ENCODE measurements at regions of chr15 and their contacts with region 1.

Region 1: GRCh38 chr15:75201609-75202250 is at the start of gene C15orf39:
- DNase-seq: peak; percentile 45 to 89 (median 69)
- ATAC-seq: peak; percentile 53
- H3K4me3 ChIP-seq: peak within 1 kb of the TSS; percentile 73
- H3K4me3 Mint-ChIP-seq: peak within 1 kb of the TSS; percentile 96
- H3K27ac ChIP-seq: peak within 1 kb of the TSS; percentile 44 to 88
- H3K27ac Mint-ChIP-seq: peak within 1 kb of the TSS; percentile 96
- H3K4me1 ChIP-seq: peaks cover 57% of the 10 kb centered on the region
- H3K4me1 Mint-ChIP-seq: peaks cover 37% of the 10 kb centered on the region
- H3K27me3 ChIP-seq: no peaks in the 10 kb centered on the region
- H3K27me3 Mint-ChIP-seq: no peaks in the 10 kb centered on the region
- CTCF ChIP-seq: peak; percentile 80
- total RNA-seq, gene C15orf39: 41.6 to 42.1 TPM

Region 2: DNA sequence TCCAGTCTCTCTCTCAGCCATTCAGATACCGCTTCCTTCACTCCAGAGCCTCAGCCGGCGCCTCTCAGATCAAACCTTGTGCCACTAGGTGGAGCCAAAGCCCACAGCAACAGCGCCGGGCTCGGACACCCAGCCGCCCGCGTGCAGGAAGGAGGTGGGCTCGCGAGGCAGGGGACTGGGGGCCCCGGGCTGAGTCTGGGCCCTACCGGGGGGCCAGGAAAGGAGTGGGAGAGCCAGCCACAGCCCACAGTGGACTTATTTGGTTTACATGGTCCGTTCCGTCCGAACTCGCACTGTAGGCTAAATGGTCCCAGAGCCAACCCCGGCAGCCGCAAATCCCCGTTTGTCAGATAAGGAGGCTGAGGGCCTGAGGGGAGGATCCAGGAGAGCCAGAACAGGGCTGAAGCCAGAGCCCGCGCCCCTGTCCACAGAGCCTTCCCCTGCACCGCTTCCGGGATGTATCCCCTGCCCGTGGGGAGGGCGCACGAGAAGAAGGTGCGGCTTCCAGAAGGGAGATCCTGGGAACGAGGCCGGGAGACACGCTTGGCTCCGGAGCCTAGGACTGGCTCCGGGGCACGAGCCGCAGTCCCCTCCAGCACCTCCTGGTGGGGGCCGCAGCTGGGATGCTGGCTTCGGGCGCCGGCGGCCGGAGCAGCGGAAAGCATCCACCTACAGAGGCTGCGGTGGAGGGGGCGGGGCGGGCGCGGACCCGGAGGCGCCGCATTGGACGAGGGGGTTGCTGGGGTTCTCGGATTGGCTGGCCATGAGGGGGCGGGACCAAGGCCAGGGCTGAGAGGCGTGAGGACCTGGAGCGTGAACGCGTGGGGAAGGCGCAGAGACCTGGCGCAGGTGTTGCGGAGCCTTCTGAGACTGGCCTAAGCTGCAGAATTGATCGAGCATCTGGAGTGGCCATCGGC is 827.7 kb before region 1 on chr15:
- CTCF ChIA-PET with region 1: no interaction called
- POLR2A ChIA-PET with region 1: no interaction called
- intact Hi-C with region 1: loop called in 1 of 2 experiments (anchors 5 kb)
- DNase-seq: peak; percentile 91 to 97 (median 95)
- ATAC-seq: peak; percentile 95
- H3K4me3 ChIP-seq: peak overlapping the region; percentile 94
- H3K4me3 Mint-ChIP-seq: peak overlapping the region; percentile 86
- H3K27ac ChIP-seq: peak overlapping the region; percentile 51 to 54
- H3K27ac Mint-ChIP-seq: peak overlapping the region; percentile 8
- H3K4me1 ChIP-seq: peaks cover 26% of the 10 kb centered on the region
- H3K4me1 Mint-ChIP-seq: peaks cover 12% of the 10 kb centered on the region
- H3K27me3 ChIP-seq: peaks cover 0 to 2% of the 10 kb centered on the region in 2 experiments
- H3K27me3 Mint-ChIP-seq: peaks cover 13% of the 10 kb centered on the region
- CTCF ChIP-seq: peak; percentile 99

Region 3: GRCh38 chr15:74695597-74696397 is 505.9 kb before region 1 on chr15 and contains the start of gene EDC3:
- CTCF ChIA-PET with region 1: no interaction called
- POLR2A ChIA-PET with region 1: no interaction called
- intact Hi-C with region 1: loop called in 1 of 2 experiments (anchors 10 kb)
- DNase-seq: peak; percentile 70 to 93 (median 80)
- ATAC-seq: peak; percentile 86
- H3K4me3 ChIP-seq: peak within 1 kb of the TSS; percentile 78
- H3K4me3 Mint-ChIP-seq: peak within 1 kb of the TSS; percentile 100
- H3K27ac ChIP-seq: peak within 1 kb of the TSS; percentile 60 to 83
- H3K27ac Mint-ChIP-seq: peak within 1 kb of the TSS; percentile 98
- H3K4me1 ChIP-seq: peaks cover 16% of the 10 kb centered on the region
- H3K4me1 Mint-ChIP-seq: peaks cover 44% of the 10 kb centered on the region
- H3K27me3 ChIP-seq: no peaks in the 10 kb centered on the region
- H3K27me3 Mint-ChIP-seq: peaks cover under 1% of the 10 kb centered on the region
- CTCF ChIP-seq: no peak
- total RNA-seq, gene EDC3: 11.0 to 11.1 TPM

Region 4: DNA sequence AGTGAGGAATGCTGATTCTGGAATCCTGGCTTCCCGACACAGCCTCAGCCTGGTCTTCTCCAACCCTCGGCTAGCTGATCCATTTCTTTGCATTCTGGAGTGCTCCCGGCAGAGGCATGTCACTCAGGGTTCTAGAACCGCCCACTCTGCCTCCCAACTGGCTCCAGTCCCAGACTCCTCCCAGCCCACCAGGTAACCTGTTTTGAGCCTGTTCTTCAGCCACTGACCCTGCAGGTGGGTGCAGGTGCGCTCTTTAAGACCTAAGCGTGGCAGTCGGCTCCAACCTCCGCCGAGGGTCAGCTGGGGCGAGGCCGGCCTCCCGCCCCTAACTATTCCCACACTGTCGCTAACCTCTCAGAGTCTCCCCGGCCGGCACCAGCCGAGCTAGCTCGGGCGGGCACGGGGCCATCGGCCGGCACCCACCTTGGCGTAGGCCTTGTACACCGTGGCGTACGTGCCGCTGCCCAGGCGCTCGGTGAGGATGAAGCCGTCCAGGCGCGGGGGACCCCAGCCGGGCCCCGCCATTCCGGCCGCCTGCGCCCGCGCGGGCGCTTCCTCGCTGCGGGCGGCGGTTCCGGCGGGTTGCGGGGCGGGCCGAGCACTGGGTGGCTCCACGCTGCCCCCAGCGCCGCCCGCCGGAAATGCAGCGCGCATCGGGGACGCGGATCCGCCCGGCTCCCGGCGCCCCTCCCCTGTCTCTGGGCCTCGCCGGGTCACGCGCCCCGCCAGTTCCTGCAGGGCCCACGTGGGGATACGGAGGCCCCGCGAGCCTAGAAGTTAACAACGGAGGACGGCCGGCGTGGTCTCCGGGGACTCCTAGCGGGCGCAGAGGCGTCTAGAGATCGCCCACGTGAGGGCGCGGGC is 358.9 kb before region 1 on chr15 and contains the start of gene ULK3:
- CTCF ChIA-PET with region 1: no interaction called
- POLR2A ChIA-PET with region 1: no interaction called
- intact Hi-C with region 1: loop called in 1 of 2 experiments (anchors 5 kb)
- DNase-seq: peak; percentile 84 to 97 (median 92)
- ATAC-seq: peak; percentile 91
- H3K4me3 ChIP-seq: peak within 1 kb of the TSS; percentile 95
- H3K4me3 Mint-ChIP-seq: peak within 1 kb of the TSS; percentile 93
- H3K27ac ChIP-seq: peak within 1 kb of the TSS; percentile 69 to 82
- H3K27ac Mint-ChIP-seq: peak within 1 kb of the TSS; percentile 86
- H3K4me1 ChIP-seq: peaks cover 61% of the 10 kb centered on the region
- H3K4me1 Mint-ChIP-seq: peaks cover 56% of the 10 kb centered on the region
- H3K27me3 ChIP-seq: no peaks in the 10 kb centered on the region
- H3K27me3 Mint-ChIP-seq: no peaks in the 10 kb centered on the region
- CTCF ChIP-seq: peak; percentile 56
- total RNA-seq, gene ULK3: 37.8 to 38.9 TPM

Region 5: DNA sequence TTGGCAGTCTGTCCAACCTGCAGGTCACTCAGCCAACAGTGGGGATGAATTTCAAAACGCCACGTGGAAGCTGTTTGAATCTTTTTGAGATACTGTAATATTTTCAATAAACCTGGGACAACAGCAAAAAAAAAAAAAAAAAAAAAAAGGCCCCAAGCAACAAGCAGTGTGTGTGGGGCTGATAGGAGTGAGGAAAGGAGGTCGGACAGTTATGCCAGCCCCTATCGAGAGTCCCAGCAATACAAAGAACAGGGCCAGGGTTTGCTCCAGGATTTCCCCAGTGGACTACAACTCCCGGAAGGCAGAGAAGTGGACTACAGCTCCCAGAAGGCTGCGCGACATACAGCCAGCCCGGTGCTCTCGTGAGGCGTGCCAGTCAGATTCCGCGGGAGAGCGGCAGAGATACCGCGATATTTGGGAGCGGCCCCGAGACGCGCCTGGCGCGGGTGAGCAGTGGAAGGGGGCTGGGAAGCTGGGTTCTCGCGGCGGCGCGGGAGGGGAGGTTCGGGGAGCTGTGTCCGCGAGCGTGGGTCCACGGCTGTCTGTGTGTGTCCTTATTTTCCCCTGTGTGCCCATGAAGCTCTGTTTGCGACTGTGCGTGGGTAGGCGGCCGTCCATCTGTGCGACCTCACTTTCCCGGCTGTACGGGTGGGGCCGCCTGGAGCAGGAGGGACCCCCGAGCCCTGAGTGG is 178.4 kb before region 1 on chr15 and contains the start of gene PPCDC:
- CTCF ChIA-PET with region 1: interaction called, 10 read pairs
- POLR2A ChIA-PET with region 1: interaction called, 27 read pairs
- intact Hi-C with region 1: no loop called
- DNase-seq: peak; percentile 83 to 96 (median 90)
- ATAC-seq: peak; percentile 100
- H3K4me3 ChIP-seq: peak within 1 kb of the TSS; percentile 81
- H3K4me3 Mint-ChIP-seq: peak within 1 kb of the TSS; percentile 99
- H3K27ac ChIP-seq: peak within 1 kb of the TSS; percentile 46 to 50
- H3K27ac Mint-ChIP-seq: peak within 1 kb of the TSS; percentile 94
- H3K4me1 ChIP-seq: peaks cover 20% of the 10 kb centered on the region
- H3K4me1 Mint-ChIP-seq: peaks cover 23% of the 10 kb centered on the region
- H3K27me3 ChIP-seq: no peaks in the 10 kb centered on the region
- H3K27me3 Mint-ChIP-seq: no peaks in the 10 kb centered on the region
- CTCF ChIP-seq: no peak
- total RNA-seq, gene PPCDC: 5.5 to 5.8 TPM

Region 6: DNA sequence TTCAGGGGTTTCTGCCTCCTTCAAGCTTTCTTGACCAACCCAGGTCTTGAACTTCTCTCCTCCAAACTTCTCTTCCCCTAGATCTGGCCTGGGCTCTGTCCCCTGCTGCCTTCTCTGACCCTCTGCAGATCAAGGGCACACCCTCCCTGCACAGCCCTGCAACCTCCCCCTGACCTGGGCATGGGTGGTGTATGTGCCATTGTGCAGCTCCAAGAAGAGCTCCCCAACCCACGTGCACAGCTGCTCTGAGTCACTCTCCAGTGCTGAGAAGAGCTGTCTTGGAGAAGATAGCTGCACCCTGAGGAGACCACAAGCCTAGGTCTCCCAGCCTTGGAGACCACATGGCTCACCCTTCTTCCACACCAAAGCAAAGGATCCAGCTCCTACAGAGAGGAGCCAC is 158.7 kb after region 1 on chr15:
- CTCF ChIA-PET with region 1: no interaction called
- POLR2A ChIA-PET with region 1: no interaction called
- intact Hi-C with region 1: no loop called
- DNase-seq: no peak
- ATAC-seq: no peak
- H3K4me3 ChIP-seq: no peak overlapping the region
- H3K4me3 Mint-ChIP-seq: no peak overlapping the region
- H3K27ac ChIP-seq: no peak overlapping the region
- H3K27ac Mint-ChIP-seq: no peak overlapping the region
- H3K4me1 ChIP-seq: no peaks in the 10 kb centered on the region
- H3K4me1 Mint-ChIP-seq: no peaks in the 10 kb centered on the region
- H3K27me3 ChIP-seq: no peaks in the 10 kb centered on the region
- H3K27me3 Mint-ChIP-seq: no peaks in the 10 kb centered on the region
- CTCF ChIP-seq: no peak

Region 7: DNA sequence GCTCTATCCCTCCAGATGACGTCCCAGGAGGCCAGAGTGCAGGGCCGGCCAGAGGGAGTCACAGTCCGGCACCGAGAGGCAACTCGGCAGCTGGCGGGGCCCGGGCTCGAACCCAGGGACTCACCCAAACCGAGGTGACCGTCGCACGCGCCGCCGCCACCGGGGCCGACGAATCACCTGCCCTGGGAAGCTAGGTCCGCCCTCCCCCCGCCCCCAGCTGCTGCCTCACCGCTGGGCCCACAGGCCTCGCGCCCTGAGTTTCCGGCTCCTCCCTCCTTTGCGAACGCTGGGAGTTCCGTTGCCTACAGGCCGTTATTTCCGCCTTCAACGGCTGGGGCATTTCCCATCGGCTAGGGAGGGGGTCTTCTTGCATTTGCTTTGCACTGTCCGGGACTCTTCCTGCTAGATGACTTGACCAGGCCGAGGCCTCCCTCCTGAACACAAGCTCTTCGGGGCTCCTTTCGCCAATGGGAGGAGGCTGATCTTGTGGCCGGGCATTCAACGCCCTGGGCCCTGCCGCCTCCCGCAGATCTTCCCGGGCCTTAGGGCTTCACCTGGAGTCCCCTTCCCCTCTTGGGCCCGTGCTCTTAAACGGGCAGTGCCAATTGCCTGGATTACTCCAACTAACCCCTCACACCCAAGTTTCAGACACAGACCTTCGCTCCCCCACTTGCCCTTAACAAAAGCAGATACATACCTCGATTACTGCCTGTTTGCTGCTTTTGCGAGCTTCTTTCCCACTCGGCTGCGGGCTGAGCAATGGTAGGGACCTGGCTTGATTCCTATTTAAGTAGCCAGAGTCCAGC is 424.0 kb after region 1 on chr15 and contains the start of gene SNUPN:
- CTCF ChIA-PET with region 1: no interaction called
- POLR2A ChIA-PET with region 1: interaction called, 3 read pairs
- intact Hi-C with region 1: loop called in 1 of 2 experiments (anchors 2 kb)
- DNase-seq: peak; percentile 86 to 97 (median 92)
- ATAC-seq: peak; percentile 92
- H3K4me3 ChIP-seq: peak within 1 kb of the TSS; percentile 100
- H3K4me3 Mint-ChIP-seq: peak within 1 kb of the TSS; percentile 92
- H3K27ac ChIP-seq: peak within 1 kb of the TSS; percentile 95
- H3K27ac Mint-ChIP-seq: peak within 1 kb of the TSS; percentile 90
- H3K4me1 ChIP-seq: peaks cover 31% of the 10 kb centered on the region
- H3K4me1 Mint-ChIP-seq: peaks cover 29% of the 10 kb centered on the region
- H3K27me3 ChIP-seq: no peaks in the 10 kb centered on the region
- H3K27me3 Mint-ChIP-seq: no peaks in the 10 kb centered on the region
- CTCF ChIP-seq: no peak
- total RNA-seq, gene SNUPN: 10.0 to 11.6 TPM

Measured in CD4-positive, alpha-beta T cell (primary cell).